ENCODE measurements at regions of chr18 and their contacts with region 1.

Region 1: GRCh38 chr18:36809590-36810381 is 19.0 kb downstream of the TPGS2 start:
- DNase-seq: peak; percentile 70
- ATAC-seq: peak; percentile 91
- H3K4me3 ChIP-seq: no peak overlapping the region
- H3K4me3 Mint-ChIP-seq: no peak overlapping the region
- H3K27ac ChIP-seq: no peak overlapping the region
- H3K27ac Mint-ChIP-seq: no peak overlapping the region
- H3K4me1 ChIP-seq: peaks cover 0 to 3% of the 10 kb centered on the region in 2 donors
- H3K4me1 Mint-ChIP-seq: peaks cover 2% of the 10 kb centered on the region
- H3K27me3 ChIP-seq: no peaks in the 10 kb centered on the region
- H3K27me3 Mint-ChIP-seq: no peaks in the 10 kb centered on the region
- CTCF ChIP-seq: peak; percentile 94

Region 2: GRCh38 chr18:34976899-34977837 is 1832.6 kb before region 1 on chr18:
- CTCF ChIA-PET with region 1: no interaction called
- POLR2A ChIA-PET with region 1: no interaction called
- intact Hi-C with region 1: loop called (anchors 10 kb)
- DNase-seq: peak; percentile 83
- ATAC-seq: peak; percentile 79
- H3K4me3 ChIP-seq: peak overlapping the region; percentile 81 to 96 (median 89)
- H3K4me3 Mint-ChIP-seq: peak overlapping the region; percentile 92
- H3K27ac ChIP-seq: peak overlapping the region in 1 of 2 donors; percentile 16
- H3K27ac Mint-ChIP-seq: no peak overlapping the region
- H3K4me1 ChIP-seq: peaks cover 17 to 26% of the 10 kb centered on the region in 2 donors
- H3K4me1 Mint-ChIP-seq: peaks cover 26% of the 10 kb centered on the region
- H3K27me3 ChIP-seq: peaks cover 0 to 20% (median 11%) of the 10 kb centered on the region in 4 experiments
- H3K27me3 Mint-ChIP-seq: peaks cover 26% of the 10 kb centered on the region
- CTCF ChIP-seq: no peak

Region 3: DNA sequence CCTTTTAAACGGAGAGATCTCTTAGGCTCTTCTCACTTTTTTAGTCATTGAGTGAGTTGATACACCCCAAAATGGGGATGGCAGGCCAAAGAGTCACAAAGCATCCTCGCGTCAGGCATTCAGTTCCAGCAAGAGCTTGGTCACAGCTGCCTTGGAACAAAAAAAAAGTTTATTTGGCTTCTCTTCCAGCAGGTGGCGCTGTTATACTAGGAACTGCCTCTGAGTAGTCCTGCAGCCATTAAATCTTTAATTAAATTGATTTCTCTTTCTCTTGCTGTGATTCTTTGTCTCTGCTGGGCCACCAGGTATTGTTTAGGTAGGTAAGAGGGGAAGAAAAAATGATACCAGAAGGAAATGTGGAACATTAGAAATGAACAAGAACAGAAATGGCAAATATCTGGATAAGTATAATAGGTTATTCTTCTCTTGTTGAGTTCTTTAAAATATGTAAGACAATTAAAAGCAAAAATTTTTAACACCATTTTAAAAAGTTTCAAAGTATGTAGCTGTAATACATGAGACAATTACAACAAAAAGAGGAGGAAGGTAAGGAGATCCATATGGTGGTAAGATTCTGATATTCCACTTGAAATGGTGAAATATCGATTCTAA is 1053.2 kb before region 1 on chr18:
- CTCF ChIA-PET with region 1: interaction called, 3 read pairs
- POLR2A ChIA-PET with region 1: no interaction called
- intact Hi-C with region 1: loop called (anchors 2 kb)
- DNase-seq: peak; percentile 75
- ATAC-seq: peak; percentile 63
- H3K4me3 ChIP-seq: no peak overlapping the region
- H3K4me3 Mint-ChIP-seq: no peak overlapping the region
- H3K27ac ChIP-seq: no peak overlapping the region
- H3K27ac Mint-ChIP-seq: no peak overlapping the region
- H3K4me1 ChIP-seq: no peaks in the 10 kb centered on the region
- H3K4me1 Mint-ChIP-seq: peaks cover 2% of the 10 kb centered on the region
- H3K27me3 ChIP-seq: peaks cover 0 to 11% (median 6%) of the 10 kb centered on the region in 4 experiments
- H3K27me3 Mint-ChIP-seq: peaks cover 27% of the 10 kb centered on the region
- CTCF ChIP-seq: peak; percentile 99

Region 4: GRCh38 chr18:36468161-36468560 is 341.6 kb before region 1 on chr18:
- CTCF ChIA-PET with region 1: no interaction called
- POLR2A ChIA-PET with region 1: no interaction called
- intact Hi-C with region 1: no loop called
- DNase-seq: peak; percentile 2
- ATAC-seq: no peak
- H3K4me3 ChIP-seq: no peak overlapping the region
- H3K4me3 Mint-ChIP-seq: no peak overlapping the region
- H3K27ac ChIP-seq: no peak overlapping the region
- H3K27ac Mint-ChIP-seq: no peak overlapping the region
- H3K4me1 ChIP-seq: no peaks in the 10 kb centered on the region
- H3K4me1 Mint-ChIP-seq: no peaks in the 10 kb centered on the region
- H3K27me3 ChIP-seq: no peaks in the 10 kb centered on the region
- H3K27me3 Mint-ChIP-seq: peaks cover 5% of the 10 kb centered on the region
- CTCF ChIP-seq: no peak

Region 5: DNA sequence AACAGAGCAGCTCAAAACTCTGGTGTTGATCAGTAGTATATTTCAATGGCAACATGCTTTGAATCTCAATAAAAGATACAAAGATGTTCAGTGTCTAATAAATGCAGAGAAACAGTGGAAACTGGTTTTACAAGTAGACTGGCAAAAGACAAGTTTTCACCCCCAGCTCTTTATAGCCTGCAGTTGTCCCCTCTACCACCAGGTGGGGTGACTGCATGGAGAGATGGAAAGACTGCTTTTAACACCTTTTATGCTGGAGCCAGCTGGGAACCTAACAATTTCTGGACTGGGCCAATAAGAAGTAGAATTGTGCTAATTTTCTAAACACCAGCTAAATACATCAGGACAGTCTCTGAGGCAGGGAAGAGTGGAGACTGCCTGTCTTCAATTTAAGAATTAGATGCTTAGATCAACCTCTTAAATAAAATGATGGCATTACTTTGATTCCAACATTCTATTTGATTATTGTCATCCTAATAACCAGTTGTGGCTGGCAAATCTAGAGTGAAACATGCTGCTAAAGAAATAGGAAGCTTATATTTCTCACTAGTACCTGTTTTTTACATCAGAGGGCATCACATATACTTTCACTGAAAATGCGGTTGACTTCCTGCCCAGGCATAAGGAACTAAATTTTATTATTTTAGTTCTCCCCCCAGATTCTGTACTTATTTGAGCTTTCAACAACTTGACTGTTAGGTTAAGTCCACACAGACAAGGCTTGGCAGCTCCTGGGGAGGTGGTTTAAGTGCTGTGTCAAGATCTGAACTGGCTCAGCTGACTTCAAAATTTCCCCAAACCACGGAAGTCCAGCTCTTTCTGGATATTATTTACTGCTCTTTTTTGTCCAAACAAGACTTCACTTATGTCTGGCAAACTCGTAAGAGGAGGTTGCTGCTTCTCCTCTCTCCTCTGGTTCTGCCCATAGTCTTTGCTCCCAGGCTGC is 121.5 kb before region 1 on chr18:
- CTCF ChIA-PET with region 1: interaction called, 20 read pairs
- POLR2A ChIA-PET with region 1: no interaction called
- intact Hi-C with region 1: no loop called
- DNase-seq: peak; percentile 35
- ATAC-seq: no peak
- H3K4me3 ChIP-seq: no peak overlapping the region
- H3K4me3 Mint-ChIP-seq: no peak overlapping the region
- H3K27ac ChIP-seq: no peak overlapping the region
- H3K27ac Mint-ChIP-seq: no peak overlapping the region
- H3K4me1 ChIP-seq: no peaks in the 10 kb centered on the region
- H3K4me1 Mint-ChIP-seq: no peaks in the 10 kb centered on the region
- H3K27me3 ChIP-seq: peaks cover 0 to 10% (median 2%) of the 10 kb centered on the region in 4 experiments
- H3K27me3 Mint-ChIP-seq: peaks cover 18% of the 10 kb centered on the region
- CTCF ChIP-seq: peak; percentile 82

Region 6: GRCh38 chr18:36821681-36822080 is 11.9 kb after region 1 on chr18:
- CTCF ChIA-PET with region 1: interaction called, 11 read pairs
- POLR2A ChIA-PET with region 1: no interaction called
- intact Hi-C with region 1: no loop called
- DNase-seq: no peak
- ATAC-seq: no peak
- H3K4me3 ChIP-seq: no peak overlapping the region
- H3K4me3 Mint-ChIP-seq: no peak overlapping the region
- H3K27ac ChIP-seq: no peak overlapping the region
- H3K27ac Mint-ChIP-seq: no peak overlapping the region
- H3K4me1 ChIP-seq: no peaks in the 10 kb centered on the region
- H3K4me1 Mint-ChIP-seq: no peaks in the 10 kb centered on the region
- H3K27me3 ChIP-seq: no peaks in the 10 kb centered on the region
- H3K27me3 Mint-ChIP-seq: no peaks in the 10 kb centered on the region
- CTCF ChIP-seq: no peak

Region 7: GRCh38 chr18:36993068-36993467 is 183.3 kb after region 1 on chr18:
- CTCF ChIA-PET with region 1: no interaction called
- POLR2A ChIA-PET with region 1: no interaction called
- intact Hi-C with region 1: no loop called
- DNase-seq: no peak
- ATAC-seq: no peak
- H3K4me3 ChIP-seq: no peak overlapping the region
- H3K4me3 Mint-ChIP-seq: no peak overlapping the region
- H3K27ac ChIP-seq: no peak overlapping the region
- H3K27ac Mint-ChIP-seq: no peak overlapping the region
- H3K4me1 ChIP-seq: no peaks in the 10 kb centered on the region
- H3K4me1 Mint-ChIP-seq: no peaks in the 10 kb centered on the region
- H3K27me3 ChIP-seq: no peaks in the 10 kb centered on the region
- H3K27me3 Mint-ChIP-seq: no peaks in the 10 kb centered on the region
- CTCF ChIP-seq: no peak

Region 8: DNA sequence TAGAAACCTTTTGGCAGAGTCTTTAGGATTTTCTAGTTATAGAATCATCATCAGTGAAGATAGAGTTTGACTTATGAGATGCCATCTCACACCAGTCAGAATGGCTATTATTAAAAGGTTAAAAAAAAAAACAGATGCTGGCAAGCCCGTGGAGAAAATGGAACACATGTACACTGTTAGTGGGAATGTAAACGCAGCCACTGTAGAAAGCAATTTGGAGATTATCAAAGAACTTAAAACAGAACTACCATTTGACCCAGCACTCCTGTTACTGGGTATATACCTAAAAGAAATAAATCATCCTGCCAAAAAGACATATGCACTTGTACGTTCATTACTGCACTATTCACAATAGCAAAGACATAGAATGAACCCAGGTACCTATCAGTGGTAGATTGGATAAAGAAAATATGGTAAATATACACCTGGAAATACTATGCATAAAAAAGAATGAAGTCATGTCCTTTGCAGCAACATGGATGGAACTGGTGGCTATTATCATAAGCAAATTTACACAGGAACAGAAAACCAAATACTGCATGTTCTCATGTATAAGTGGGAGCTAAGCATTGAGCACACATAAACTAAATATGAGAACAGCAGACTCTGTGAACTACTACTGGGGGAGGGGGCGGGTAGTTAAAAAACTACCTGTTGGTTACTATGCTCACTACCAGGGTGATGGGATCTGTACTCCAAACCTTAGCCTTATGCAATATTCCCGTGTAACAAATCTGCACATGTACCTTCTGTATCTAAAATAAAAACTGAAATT is 298.1 kb after region 1 on chr18:
- CTCF ChIA-PET with region 1: no interaction called
- POLR2A ChIA-PET with region 1: no interaction called
- intact Hi-C with region 1: no loop called
- DNase-seq: no peak
- ATAC-seq: no peak
- H3K4me3 ChIP-seq: no peak overlapping the region
- H3K4me3 Mint-ChIP-seq: no peak overlapping the region
- H3K27ac ChIP-seq: no peak overlapping the region
- H3K27ac Mint-ChIP-seq: no peak overlapping the region
- H3K4me1 ChIP-seq: no peaks in the 10 kb centered on the region
- H3K4me1 Mint-ChIP-seq: no peaks in the 10 kb centered on the region
- H3K27me3 ChIP-seq: no peaks in the 10 kb centered on the region
- H3K27me3 Mint-ChIP-seq: no peaks in the 10 kb centered on the region
- CTCF ChIP-seq: no peak

Measured in B cell (primary cell).